ENCODE measurements at regions of chr1 and their contacts with region 1.

Region 1: DNA sequence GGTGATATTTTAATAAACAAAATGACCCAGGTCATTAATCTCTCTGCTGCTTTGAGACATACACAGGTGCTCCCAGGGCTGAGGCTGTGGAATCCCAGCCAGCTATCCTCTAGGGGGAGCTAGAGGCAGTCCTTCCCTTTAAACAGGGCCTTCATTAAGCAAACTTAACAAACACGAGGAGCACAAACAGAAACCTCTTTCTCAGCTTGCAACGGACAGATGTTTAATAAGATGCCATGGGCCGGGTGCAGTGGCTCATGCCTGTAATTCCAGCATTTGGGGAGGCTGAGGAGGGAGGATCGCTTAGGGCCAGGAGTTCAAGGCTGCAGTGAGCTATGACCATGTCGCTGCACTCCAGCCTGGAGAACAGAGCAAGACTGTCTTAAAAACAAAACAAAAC is 106.7 kb downstream of the HIVEP3 start:
- DNase-seq: peak; percentile 77
- ATAC-seq: peak; percentile 64
- H3K4me3 Mint-ChIP-seq: no peak overlapping the region
- H3K27ac Mint-ChIP-seq: no peak overlapping the region
- H3K4me1 Mint-ChIP-seq: peaks cover 47% of the 10 kb centered on the region
- H3K27me3 Mint-ChIP-seq: no peaks in the 10 kb centered on the region
- CTCF ChIP-seq: peak; percentile 51

Region 2: GRCh38 chr1:41783189-41783639 is 28.8 kb before region 1 on chr1:
- CTCF ChIA-PET with region 1: no interaction called
- POLR2A ChIA-PET with region 1: no interaction called
- intact Hi-C with region 1: no loop called
- DNase-seq: peak; percentile 76
- ATAC-seq: peak; percentile 93
- H3K4me3 Mint-ChIP-seq: peak overlapping the region; percentile 60
- H3K27ac Mint-ChIP-seq: peak overlapping the region; percentile 82
- H3K4me1 Mint-ChIP-seq: peaks cover 42% of the 10 kb centered on the region
- H3K27me3 Mint-ChIP-seq: no peaks in the 10 kb centered on the region
- CTCF ChIP-seq: no peak

Region 3: DNA sequence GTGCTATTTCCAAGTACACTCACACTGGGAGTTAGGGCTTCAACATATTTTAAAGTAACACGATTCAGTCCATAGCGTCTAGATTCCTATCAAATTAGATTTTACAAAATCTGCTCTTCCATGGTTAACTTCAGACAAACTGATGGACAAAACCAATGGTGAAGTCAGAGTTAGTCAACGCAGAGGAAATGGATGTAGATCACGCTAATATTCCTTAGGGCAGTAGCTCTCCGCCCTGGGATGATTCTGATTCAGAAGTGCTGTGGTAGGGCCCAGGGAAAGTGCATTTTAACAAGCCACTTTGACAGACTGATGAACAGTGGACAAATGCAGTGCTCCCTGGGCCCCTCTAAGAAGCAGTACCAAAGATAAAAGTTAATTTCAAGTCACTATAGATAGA is 23.4 kb after region 1 on chr1:
- CTCF ChIA-PET with region 1: interaction called, 10 read pairs
- POLR2A ChIA-PET with region 1: no interaction called
- intact Hi-C with region 1: no loop called
- DNase-seq: no peak
- ATAC-seq: no peak
- H3K4me3 Mint-ChIP-seq: no peak overlapping the region
- H3K27ac Mint-ChIP-seq: no peak overlapping the region
- H3K4me1 Mint-ChIP-seq: peaks cover 2% of the 10 kb centered on the region
- H3K27me3 Mint-ChIP-seq: no peaks in the 10 kb centered on the region
- CTCF ChIP-seq: no peak

Region 4: DNA sequence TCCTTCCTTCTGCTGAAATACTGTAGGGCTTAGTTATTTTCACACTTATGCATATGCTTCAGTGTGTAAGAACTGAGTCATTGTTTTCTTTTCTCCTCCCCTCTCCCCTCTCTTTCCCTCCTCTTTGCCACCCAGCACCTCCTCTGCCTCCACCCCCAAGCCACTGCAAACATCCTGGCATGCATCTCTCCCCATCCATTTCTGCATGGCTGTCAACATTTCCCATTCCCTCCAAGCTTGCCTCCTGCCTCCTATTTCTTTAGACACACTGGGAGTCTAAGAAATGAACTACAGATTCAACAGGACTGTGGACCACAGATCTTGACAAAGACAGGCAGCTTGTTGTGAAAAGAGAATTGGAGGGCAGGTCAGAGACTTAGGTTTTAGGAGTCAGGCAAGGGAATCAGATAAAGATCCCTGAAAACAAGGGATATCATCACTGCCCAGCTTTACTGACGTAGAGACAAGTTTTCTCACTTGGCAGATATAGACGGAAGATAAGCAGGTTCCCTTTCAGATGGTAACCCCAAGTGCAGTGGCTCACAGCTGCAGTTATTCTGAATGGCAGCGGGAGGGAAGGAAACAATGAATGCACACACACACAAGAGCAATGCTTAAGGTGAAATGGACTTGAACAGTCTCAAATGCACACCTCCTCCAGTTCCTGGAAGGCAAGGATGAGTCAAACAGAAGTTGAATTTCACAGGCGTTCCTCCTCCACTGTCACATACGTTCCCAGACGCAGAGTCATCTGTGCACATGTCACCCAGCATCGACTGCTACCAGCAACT is 50.5 kb after region 1 on chr1:
- CTCF ChIA-PET with region 1: interaction called, 7 read pairs
- POLR2A ChIA-PET with region 1: no interaction called
- intact Hi-C with region 1: loop called (anchors 5 kb)
- DNase-seq: peak; percentile 82
- ATAC-seq: peak; percentile 94
- H3K4me3 Mint-ChIP-seq: peak overlapping the region; percentile 14
- H3K27ac Mint-ChIP-seq: peak overlapping the region; percentile 85
- H3K4me1 Mint-ChIP-seq: peaks cover 42% of the 10 kb centered on the region
- H3K27me3 Mint-ChIP-seq: no peaks in the 10 kb centered on the region
- CTCF ChIP-seq: no peak

Region 5: GRCh38 chr1:41891199-41891896 is 79.3 kb after region 1 on chr1:
- CTCF ChIA-PET with region 1: interaction called, 12 read pairs
- POLR2A ChIA-PET with region 1: interaction called, 3 read pairs
- intact Hi-C with region 1: no loop called
- DNase-seq: peak; percentile 71
- ATAC-seq: peak; percentile 90
- H3K4me3 Mint-ChIP-seq: peak overlapping the region; percentile 84
- H3K27ac Mint-ChIP-seq: peak overlapping the region; percentile 92
- H3K4me1 Mint-ChIP-seq: peaks cover 49% of the 10 kb centered on the region
- H3K27me3 Mint-ChIP-seq: no peaks in the 10 kb centered on the region
- CTCF ChIP-seq: peak; percentile 65

Region 6: GRCh38 chr1:42035830-42036604 is 224.0 kb after region 1 on chr1:
- CTCF ChIA-PET with region 1: interaction called, 6 read pairs
- POLR2A ChIA-PET with region 1: no interaction called
- intact Hi-C with region 1: loop called (anchors 10 kb)
- DNase-seq: peak; percentile 99
- ATAC-seq: peak; percentile 95
- H3K4me3 Mint-ChIP-seq: peak overlapping the region; percentile 77
- H3K27ac Mint-ChIP-seq: peak overlapping the region; percentile 69
- H3K4me1 Mint-ChIP-seq: peaks cover 28% of the 10 kb centered on the region
- H3K27me3 Mint-ChIP-seq: no peaks in the 10 kb centered on the region
- CTCF ChIP-seq: no peak